HEK293 (cell line): ENCODE measurements at regions of chr11 and their contacts with region 1.

Region 1: DNA sequence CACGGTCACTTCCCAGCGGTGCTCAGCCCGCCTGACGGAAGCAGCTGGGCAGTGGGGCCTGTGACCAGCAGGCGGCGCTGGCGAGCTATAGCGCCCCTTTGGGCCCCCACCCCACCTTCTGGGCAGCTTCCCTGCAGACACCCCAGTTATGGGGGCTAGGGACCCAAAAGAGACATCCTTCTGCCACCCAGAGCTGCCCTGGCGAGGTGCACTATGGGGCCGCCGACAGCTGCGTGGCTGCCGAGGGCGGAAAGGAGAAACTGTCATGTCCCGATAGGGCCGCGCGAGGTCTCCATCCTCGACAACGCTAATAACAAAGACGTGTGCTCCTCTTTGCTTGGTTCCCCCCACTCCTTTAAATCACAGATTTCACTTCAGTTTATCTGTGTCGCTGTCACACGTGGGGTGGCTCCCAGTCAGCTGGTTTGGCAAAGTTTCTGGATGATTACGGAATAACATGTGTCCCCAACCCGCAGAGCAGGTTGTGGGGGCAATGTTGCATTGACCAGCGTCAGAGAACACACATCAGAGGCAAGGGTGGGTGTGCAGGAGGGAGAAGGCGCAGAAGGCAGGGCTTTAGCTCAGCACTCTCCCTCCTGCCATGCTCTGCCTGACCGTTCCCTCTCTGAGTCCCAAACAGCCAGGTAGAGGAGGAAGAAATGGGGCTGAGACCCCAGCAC is 674 bp upstream of the MYO7A start:
- H3K4me3 ChIP-seq: peak overlapping the region; percentile 44
- H3K27ac ChIP-seq: no peak overlapping the region
- H3K4me1 ChIP-seq: no peaks in the 10 kb centered on the region; the same call in 1 of the 2 replicates
- CTCF ChIP-seq: peak; percentile 88

Region 2: GRCh38 chr11:77107950-77108349 is 19.4 kb before region 1 on chr11:
- CTCF ChIA-PET with region 1: interaction called, 15 read pairs
- POLR2A ChIA-PET with region 1: no interaction called
- H3K4me3 ChIP-seq: no peak overlapping the region
- H3K27ac ChIP-seq: no peak overlapping the region
- H3K4me1 ChIP-seq: no peaks in the 10 kb centered on the region
- CTCF ChIP-seq: no peak

Region 3: GRCh38 chr11:77113382-77114088 is 13.8 kb before region 1 on chr11:
- CTCF ChIA-PET with region 1: interaction called, 18 read pairs
- POLR2A ChIA-PET with region 1: no interaction called
- H3K4me3 ChIP-seq: no peak overlapping the region
- H3K27ac ChIP-seq: no peak overlapping the region
- H3K4me1 ChIP-seq: no peaks in the 10 kb centered on the region
- CTCF ChIP-seq: no peak

Region 4: GRCh38 chr11:77140231-77140851 is 13.0 kb after region 1 on chr11:
- CTCF ChIA-PET with region 1: interaction called, 18 read pairs
- POLR2A ChIA-PET with region 1: no interaction called
- H3K4me3 ChIP-seq: no peak overlapping the region
- H3K27ac ChIP-seq: no peak overlapping the region
- H3K4me1 ChIP-seq: no peaks in the 10 kb centered on the region
- CTCF ChIP-seq: no peak

Region 5: GRCh38 chr11:77187776-77188632 is 60.6 kb after region 1 on chr11:
- CTCF ChIA-PET with region 1: interaction called, 95 read pairs
- POLR2A ChIA-PET with region 1: no interaction called
- H3K4me3 ChIP-seq: no peak overlapping the region
- H3K27ac ChIP-seq: no peak overlapping the region
- H3K4me1 ChIP-seq: no peaks in the 10 kb centered on the region
- CTCF ChIP-seq: peak; percentile 43; the same call in 1 of the 2 replicates

Region 6: GRCh38 chr11:77223797-77224196 is 96.4 kb after region 1 on chr11:
- CTCF ChIA-PET with region 1: no interaction called
- POLR2A ChIA-PET with region 1: no interaction called
- H3K4me3 ChIP-seq: no peak overlapping the region
- H3K27ac ChIP-seq: no peak overlapping the region
- H3K4me1 ChIP-seq: no peaks in the 10 kb centered on the region
- CTCF ChIP-seq: no peak

Region 7: DNA sequence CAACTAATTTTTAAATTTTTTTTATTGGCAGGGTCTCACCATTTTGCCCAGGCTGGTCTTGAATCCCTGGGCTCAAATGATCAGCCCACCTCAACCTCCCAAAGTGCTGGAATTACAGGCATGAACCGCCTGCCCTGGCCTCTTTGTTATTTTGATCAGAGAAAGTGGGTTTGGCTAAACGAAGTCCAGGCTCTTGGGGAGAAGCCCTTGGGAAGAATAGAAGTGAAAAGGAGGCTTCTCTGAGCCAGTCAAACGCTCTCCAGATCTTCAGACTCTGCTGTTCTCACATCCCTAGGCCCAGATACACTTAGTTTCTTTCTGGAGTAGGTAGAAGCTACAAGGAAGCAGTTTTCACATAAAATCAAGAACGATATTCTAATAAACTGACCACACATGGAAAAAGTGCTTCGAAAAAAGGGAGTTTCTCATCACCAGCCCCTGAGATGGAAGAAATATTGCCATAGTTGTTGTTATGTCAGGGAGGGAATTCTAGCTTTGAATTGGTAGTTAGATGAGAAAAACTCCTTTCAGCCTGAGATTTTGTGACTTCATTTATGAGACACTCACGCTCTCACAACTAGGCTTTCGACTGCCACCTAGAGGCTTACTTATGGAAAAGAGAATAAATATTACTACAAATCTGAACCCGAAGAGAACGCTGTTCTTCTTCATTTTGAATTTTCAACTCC is 420.6 kb after region 1 on chr11:
- CTCF ChIA-PET with region 1: interaction called, 17 read pairs
- POLR2A ChIA-PET with region 1: no interaction called
- H3K4me3 ChIP-seq: no peak overlapping the region
- H3K27ac ChIP-seq: no peak overlapping the region
- H3K4me1 ChIP-seq: no peaks in the 10 kb centered on the region
- CTCF ChIP-seq: no peak

Region 8: DNA sequence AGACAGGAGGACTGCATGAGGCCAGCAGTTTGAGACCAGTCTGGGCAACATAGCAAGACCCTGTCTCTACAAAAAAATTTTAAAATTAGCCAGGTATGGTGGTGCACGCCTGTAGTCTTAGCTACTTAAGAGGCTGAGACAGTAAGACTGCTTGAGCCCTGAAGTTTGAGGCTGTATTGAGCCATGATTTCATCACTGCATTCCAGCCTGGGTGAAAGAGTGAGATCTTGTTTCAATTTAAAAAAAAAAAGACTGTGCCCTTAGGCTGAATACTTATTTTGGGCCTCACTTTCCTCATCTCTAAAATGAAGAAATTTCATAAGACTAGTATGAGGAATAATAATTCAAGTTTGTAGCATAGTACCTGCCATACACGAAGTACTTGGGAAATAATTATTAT is 469.3 kb after region 1 on chr11:
- CTCF ChIA-PET with region 1: no interaction called
- POLR2A ChIA-PET with region 1: no interaction called
- H3K4me3 ChIP-seq: no peak overlapping the region
- H3K27ac ChIP-seq: no peak overlapping the region
- H3K4me1 ChIP-seq: no peaks in the 10 kb centered on the region
- CTCF ChIP-seq: no peak